Activated CD4-positive, alpha-beta memory T cell treated with anti-CD3 and anti-CD28 coated beads for 36 hours (primary cell): ENCODE measurements at regions of chr6 and their contacts with region 1.

Region 1: GRCh38 chr6:156791320-156791850 is 14.2 kb downstream of the ARID1B start:
- DNase-seq: no peak
- H3K4me3 Mint-ChIP-seq: peak overlapping the region; percentile 26
- H3K27ac Mint-ChIP-seq: peak overlapping the region; percentile 36
- H3K4me1 Mint-ChIP-seq: peaks cover 88% of the 10 kb centered on the region
- H3K27me3 Mint-ChIP-seq: no peaks in the 10 kb centered on the region

Region 2: GRCh38 chr6:156582509-156582992 is 208.8 kb before region 1 on chr6:
- CTCF ChIA-PET with region 1: no interaction called
- POLR2A ChIA-PET with region 1: no interaction called
- intact Hi-C with region 1: no loop called
- DNase-seq: no peak
- H3K4me3 Mint-ChIP-seq: no peak overlapping the region
- H3K27ac Mint-ChIP-seq: no peak overlapping the region
- H3K4me1 Mint-ChIP-seq: no peaks in the 10 kb centered on the region
- H3K27me3 Mint-ChIP-seq: no peaks in the 10 kb centered on the region

Region 3: DNA sequence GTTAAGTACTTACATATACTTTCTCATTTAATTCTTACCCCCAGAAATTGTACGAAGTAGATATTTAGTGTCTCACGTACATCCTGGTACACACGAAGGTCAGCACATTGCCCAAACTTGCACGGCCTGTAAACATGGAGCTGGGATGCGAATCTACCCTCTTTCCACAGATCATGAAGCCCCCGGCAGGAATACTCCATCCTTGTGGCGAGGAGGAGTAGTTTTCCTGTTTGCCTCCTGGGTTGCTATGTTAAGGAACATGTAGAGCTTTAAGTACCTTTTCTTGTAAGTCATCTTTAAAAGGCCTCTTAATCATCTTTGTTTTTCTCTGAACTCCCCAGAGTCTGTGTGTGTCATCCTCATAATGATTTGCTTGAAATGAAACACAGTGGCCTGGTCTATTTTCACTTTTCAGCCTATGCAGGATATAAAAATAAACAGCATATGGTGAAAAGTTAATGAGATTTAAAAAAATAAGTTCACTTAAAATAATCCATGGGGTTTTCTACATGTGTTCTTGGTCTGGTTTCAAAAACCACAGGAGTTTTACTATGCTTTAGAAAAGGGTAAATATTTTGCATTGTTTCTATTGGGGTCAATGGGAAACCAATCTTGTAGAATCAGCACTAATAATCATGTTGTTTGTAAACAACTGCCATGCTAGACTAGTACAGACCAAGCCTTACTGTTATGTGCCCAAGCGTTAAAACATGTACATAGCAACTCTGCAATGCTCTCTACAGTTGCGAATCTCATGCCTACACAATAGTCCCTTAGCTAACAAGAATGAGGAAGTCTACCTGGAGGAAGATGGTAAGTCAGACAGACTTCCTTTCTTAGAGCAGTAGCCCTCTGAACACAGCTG is 23.6 kb before region 1 on chr6:
- CTCF ChIA-PET with region 1: no interaction called
- POLR2A ChIA-PET with region 1: no interaction called
- intact Hi-C with region 1: no loop called
- DNase-seq: no peak
- H3K4me3 Mint-ChIP-seq: no peak overlapping the region
- H3K27ac Mint-ChIP-seq: no peak overlapping the region
- H3K4me1 Mint-ChIP-seq: peaks cover 8% of the 10 kb centered on the region
- H3K27me3 Mint-ChIP-seq: no peaks in the 10 kb centered on the region

Region 4: DNA sequence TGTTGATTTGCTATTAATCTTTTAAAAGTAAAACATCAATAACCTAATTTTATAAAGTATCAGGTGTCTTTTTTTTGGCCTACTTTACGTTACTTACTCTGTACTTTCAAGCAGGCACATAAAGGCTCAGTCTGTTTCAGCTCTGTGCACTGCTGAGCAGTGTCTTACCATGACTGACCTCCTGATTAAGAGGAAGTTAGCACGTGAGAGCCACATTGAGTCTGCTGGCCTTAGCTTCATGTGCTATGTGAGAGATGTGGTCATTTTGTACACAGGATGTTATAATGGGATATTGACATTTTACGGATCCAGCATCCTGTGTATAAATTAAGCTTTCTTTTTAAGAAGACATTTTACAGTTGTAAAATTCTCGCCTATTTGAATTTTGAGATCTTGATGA is 17.6 kb after region 1 on chr6:
- CTCF ChIA-PET with region 1: interaction called, 3 read pairs
- POLR2A ChIA-PET with region 1: no interaction called
- intact Hi-C with region 1: loop called (anchors 2 kb)
- DNase-seq: no peak
- H3K4me3 Mint-ChIP-seq: no peak overlapping the region
- H3K27ac Mint-ChIP-seq: no peak overlapping the region
- H3K4me1 Mint-ChIP-seq: peaks cover 70% of the 10 kb centered on the region
- H3K27me3 Mint-ChIP-seq: no peaks in the 10 kb centered on the region